WTC11 (cell line): ENCODE measurements at regions of chr20 and their contacts with region 1.

Region 1: GRCh38 chr20:59222253-59223181 is 58.9 kb downstream of the ZNF831 start:
- DNase-seq: peak; percentile 93
- ATAC-seq: peak; percentile 88
- H3K4me3 Mint-ChIP-seq: peak overlapping the region; percentile 80
- H3K27ac Mint-ChIP-seq: no peak overlapping the region
- H3K4me1 Mint-ChIP-seq: peaks cover 38% of the 10 kb centered on the region
- H3K27me3 Mint-ChIP-seq: peaks cover 55% of the 10 kb centered on the region
- CTCF ChIP-seq: peak; percentile 86

Region 2: GRCh38 chr20:59087829-59088433 is 134.6 kb before region 1 on chr20:
- CTCF ChIA-PET with region 1: interaction called, 13 read pairs
- POLR2A ChIA-PET with region 1: no interaction called
- DNase-seq: peak; percentile 88
- ATAC-seq: peak; percentile 92
- H3K4me3 Mint-ChIP-seq: no peak overlapping the region
- H3K27ac Mint-ChIP-seq: no peak overlapping the region
- H3K4me1 Mint-ChIP-seq: peaks cover 4% of the 10 kb centered on the region; the same call in 1 of the 2 replicates
- H3K27me3 Mint-ChIP-seq: peaks cover 4% of the 10 kb centered on the region; the same call in 1 of the 2 replicates
- CTCF ChIP-seq: peak; percentile 88

Region 3: GRCh38 chr20:59184880-59185447 is 37.6 kb before region 1 on chr20:
- CTCF ChIA-PET with region 1: interaction called, 10 read pairs
- POLR2A ChIA-PET with region 1: no interaction called
- DNase-seq: no peak
- ATAC-seq: no peak
- H3K4me3 Mint-ChIP-seq: no peak overlapping the region
- H3K27ac Mint-ChIP-seq: no peak overlapping the region
- H3K4me1 Mint-ChIP-seq: no peaks in the 10 kb centered on the region
- H3K27me3 Mint-ChIP-seq: peaks cover 2% of the 10 kb centered on the region; the same call in 1 of the 2 replicates
- CTCF ChIP-seq: no peak

Region 4: GRCh38 chr20:59403261-59403961 is 180.9 kb after region 1 on chr20:
- CTCF ChIA-PET with region 1: interaction called, 22 read pairs
- POLR2A ChIA-PET with region 1: no interaction called
- DNase-seq: peak; percentile 86
- ATAC-seq: peak; percentile 76
- H3K4me3 Mint-ChIP-seq: peak overlapping the region; percentile 58; the same call in 1 of the 2 replicates
- H3K27ac Mint-ChIP-seq: no peak overlapping the region
- H3K4me1 Mint-ChIP-seq: peaks cover 16% of the 10 kb centered on the region
- H3K27me3 Mint-ChIP-seq: peaks cover 12% of the 10 kb centered on the region
- CTCF ChIP-seq: peak; percentile 100